A549 (cell line): ENCODE measurements at regions of chr2 and their contacts with region 1.

Region 1: DNA sequence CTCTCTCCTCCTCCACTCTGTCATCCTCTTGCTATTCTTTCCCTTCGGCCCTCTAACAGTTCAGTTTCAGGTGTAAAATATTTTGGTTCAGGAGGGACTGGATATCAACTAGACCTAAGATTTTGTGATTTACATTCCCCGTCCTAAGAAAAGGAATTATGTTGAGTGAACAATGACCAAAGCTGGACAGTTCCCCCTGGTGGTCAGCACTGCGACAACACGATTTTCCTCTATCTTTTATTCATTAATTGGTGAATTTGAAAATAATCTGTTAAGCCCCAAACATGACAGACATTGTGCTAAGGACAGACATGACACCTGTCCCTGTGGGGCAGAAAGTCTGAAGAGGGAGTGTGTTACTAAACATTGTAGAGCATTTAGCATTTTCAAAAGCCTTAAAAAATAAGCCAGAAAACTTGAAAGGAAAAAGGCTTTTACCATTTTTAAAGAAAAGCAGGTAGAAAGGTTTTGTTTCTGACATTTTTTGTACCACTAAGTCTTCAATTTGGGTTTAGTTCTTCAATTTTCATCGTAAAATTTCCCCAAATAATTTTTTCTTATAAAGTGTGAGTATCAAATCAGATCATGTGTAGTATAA is 28.4 kb upstream of the GTF2A1L start:
- DNase-seq: peak; percentile 44 to 54
- ATAC-seq: peak; percentile 51 to 79; a peak in 4 of 6 replicates
- H3K4me3 ChIP-seq: no peak overlapping the region
- H3K27ac ChIP-seq: no peak overlapping the region
- H3K4me1 ChIP-seq: no peaks in the 10 kb centered on the region
- CTCF ChIP-seq: peak; percentile 84
- EP300 ChIP-seq: no peak
- POLR2A ChIP-seq: no peak
- RAD21 ChIP-seq: peak; percentile 74 to 78

Region 2: GRCh38 chr2:48566592-48567255 is 22.5 kb before region 1 on chr2:
- CTCF ChIA-PET with region 1: interaction called, 27 read pairs
- POLR2A ChIA-PET with region 1: no interaction called
- DNase-seq: peak; percentile 33 to 47
- ATAC-seq: peak; percentile 69 to 84; a peak in 5 of 6 replicates
- H3K4me3 ChIP-seq: no peak overlapping the region
- H3K27ac ChIP-seq: no peak overlapping the region
- H3K4me1 ChIP-seq: no peaks in the 10 kb centered on the region
- CTCF ChIP-seq: peak; percentile 36; the same call in 2 of the 3 replicates
- EP300 ChIP-seq: no peak
- POLR2A ChIP-seq: no peak
- RAD21 ChIP-seq: peak; percentile 14 to 41; a peak in 2 of 5 replicates

Region 3: DNA sequence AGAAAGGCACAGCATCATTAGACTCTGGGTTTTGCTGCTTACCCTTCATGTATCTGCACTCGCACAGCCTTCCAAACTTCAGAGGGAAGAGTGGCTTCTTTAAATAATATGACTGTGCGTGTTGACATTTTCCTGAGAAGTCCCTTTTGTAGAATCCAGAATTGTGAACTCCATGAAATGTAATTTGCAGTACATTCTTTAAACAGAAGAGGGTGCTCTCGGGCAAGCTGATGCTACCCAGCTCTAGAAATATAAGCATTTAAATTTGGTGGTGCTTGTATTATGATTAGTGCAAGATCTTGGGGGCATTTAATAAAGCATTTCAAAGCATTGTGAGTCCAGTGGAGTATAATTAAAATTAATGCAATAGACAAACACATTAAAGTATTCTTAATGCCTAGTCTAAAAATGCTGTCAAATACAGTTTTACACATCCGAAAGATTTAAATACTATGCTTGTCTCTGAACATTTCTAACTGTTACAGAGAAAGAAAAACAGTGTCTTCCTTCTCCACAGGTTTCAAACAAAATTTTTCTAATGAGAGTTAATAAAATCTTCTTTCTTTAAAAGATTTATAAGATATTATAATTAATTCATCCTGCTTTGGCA is 11.0 kb after region 1 on chr2:
- CTCF ChIA-PET with region 1: interaction called, 15 read pairs
- POLR2A ChIA-PET with region 1: no interaction called
- DNase-seq: peak in 1 of 2 experiments; percentile 46
- ATAC-seq: peak; percentile 43 to 71; a peak in 4 of 6 replicates
- H3K4me3 ChIP-seq: no peak overlapping the region
- H3K27ac ChIP-seq: no peak overlapping the region
- H3K4me1 ChIP-seq: no peaks in the 10 kb centered on the region
- CTCF ChIP-seq: peak; percentile 73
- EP300 ChIP-seq: no peak
- POLR2A ChIP-seq: no peak
- RAD21 ChIP-seq: peak; percentile 73 to 77